Prostate gland (tissue), 2 donors: ENCODE measurements at regions of chr5 and their contacts with region 1.

Region 1: DNA sequence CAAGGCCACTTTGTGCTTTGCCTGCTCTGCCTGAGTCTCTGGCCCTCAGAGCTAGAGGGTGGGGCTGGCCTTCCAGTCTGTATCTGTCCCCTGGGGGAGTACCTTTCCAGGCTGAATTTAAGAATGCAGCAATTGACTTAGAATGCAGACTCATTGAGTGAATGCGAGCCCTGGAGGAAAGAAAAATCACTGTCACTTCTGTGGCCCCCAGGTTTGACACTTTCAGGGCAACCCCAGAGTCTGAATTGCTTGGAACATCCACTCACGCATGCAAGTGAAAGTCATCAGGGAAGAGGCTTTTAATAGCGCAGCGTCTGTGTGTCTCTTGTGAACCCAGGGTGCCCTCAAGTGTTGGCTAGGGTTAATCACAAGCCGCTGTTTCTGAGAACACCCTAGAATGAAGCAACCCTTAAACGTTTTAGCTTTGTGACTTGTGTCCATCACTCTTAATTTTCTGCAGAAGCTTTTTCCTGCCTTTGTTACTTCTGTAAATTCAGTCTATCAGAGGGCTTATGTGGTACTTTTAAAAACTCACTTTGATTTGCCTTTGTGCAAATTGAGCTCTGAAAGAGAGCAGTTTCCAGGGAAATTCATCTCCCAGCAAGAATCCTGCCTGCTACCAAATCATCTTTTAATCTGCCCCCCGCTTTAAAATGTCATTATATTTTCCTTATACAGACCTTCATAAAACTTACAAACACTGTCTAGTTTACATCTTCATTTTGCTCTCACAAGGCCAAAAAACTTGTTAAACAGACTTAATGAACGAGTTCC is 146.8 kb upstream of the IQGAP2 start:
- DNase-seq: peak; percentile 70
- H3K4me3 ChIP-seq: no peak overlapping the region
- H3K27ac ChIP-seq: no peak overlapping the region
- H3K4me1 ChIP-seq: no peaks in the 10 kb centered on the region
- H3K27me3 ChIP-seq: no peaks in the 10 kb centered on the region
- CTCF ChIP-seq: peak; percentile 24 to 72 (median 44)
- POLR2A ChIP-seq: no peak

Region 2: GRCh38 chr5:75053304-75054133 is 1202.8 kb before region 1 on chr5:
- intact Hi-C with region 1: no loop called
- DNase-seq: peak; percentile 33
- H3K4me3 ChIP-seq: peak overlapping the region; percentile 76 to 82
- H3K27ac ChIP-seq: peak overlapping the region; percentile 86
- H3K4me1 ChIP-seq: peaks cover 3% of the 10 kb centered on the region
- H3K27me3 ChIP-seq: no peaks in the 10 kb centered on the region
- CTCF ChIP-seq: peak in 1 of 4 experiments; percentile 36
- POLR2A ChIP-seq: no peak

Region 3: DNA sequence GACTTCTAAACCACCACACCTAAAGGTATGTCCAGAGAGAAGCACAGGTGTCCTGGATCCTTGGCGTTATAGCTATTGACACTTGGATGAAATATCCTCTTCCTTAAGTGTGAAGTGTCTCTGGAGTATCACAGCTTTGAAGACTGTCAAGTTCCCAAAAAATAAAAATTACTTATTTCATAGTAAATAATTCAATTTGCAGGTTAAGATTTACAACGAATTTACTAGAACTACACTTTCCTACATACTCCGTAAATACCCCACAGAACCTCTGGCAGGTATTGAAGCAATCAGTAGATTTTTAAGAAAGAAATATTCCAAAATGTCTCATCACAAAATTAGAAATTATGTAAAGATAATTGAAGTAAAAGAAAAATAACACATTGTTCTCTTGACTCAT is 511.9 kb before region 1 on chr5:
- intact Hi-C with region 1: loop called (anchors 10 kb)
- DNase-seq: no peak
- H3K4me3 ChIP-seq: no peak overlapping the region
- H3K27ac ChIP-seq: no peak overlapping the region
- H3K4me1 ChIP-seq: no peaks in the 10 kb centered on the region
- H3K27me3 ChIP-seq: no peaks in the 10 kb centered on the region
- CTCF ChIP-seq: no peak
- POLR2A ChIP-seq: no peak

Region 4: DNA sequence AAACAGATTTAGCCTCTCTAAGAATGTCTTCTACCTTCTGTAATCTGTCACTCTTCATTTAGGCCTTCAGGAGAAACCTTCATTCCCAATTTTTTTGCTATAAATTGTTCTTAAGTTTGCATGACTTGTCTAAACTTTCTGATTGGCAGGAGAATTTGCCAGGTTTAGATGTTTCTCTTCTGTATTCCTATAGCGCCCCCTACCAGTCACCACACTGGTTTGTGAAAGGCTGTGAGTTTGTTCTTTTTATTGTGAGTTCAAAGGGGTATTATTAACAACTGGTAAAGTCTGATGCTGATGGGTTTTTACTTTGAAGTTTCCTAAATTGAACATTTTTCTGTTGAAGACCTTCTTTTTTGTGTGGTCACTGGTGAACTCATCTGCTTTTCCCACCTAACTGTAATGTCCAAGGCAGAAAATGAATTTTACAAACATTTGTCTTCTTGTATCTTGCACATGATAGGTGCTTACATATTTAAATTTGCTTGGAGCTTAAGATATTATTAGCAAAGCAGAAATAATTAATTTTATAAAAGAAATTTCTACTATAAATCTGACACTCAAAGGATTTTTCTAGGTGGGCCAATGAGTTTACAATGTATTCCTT is 385.3 kb after region 1 on chr5:
- intact Hi-C with region 1: no loop called
- DNase-seq: peak; percentile 64
- H3K4me3 ChIP-seq: no peak overlapping the region
- H3K27ac ChIP-seq: no peak overlapping the region
- H3K4me1 ChIP-seq: no peaks in the 10 kb centered on the region
- H3K27me3 ChIP-seq: no peaks in the 10 kb centered on the region
- CTCF ChIP-seq: peak; percentile 9 to 60 (median 54)
- POLR2A ChIP-seq: no peak